CD8-positive, alpha-beta T cell (primary cell): ENCODE measurements at regions of chr17 and their contacts with region 1.

Region 1: DNA sequence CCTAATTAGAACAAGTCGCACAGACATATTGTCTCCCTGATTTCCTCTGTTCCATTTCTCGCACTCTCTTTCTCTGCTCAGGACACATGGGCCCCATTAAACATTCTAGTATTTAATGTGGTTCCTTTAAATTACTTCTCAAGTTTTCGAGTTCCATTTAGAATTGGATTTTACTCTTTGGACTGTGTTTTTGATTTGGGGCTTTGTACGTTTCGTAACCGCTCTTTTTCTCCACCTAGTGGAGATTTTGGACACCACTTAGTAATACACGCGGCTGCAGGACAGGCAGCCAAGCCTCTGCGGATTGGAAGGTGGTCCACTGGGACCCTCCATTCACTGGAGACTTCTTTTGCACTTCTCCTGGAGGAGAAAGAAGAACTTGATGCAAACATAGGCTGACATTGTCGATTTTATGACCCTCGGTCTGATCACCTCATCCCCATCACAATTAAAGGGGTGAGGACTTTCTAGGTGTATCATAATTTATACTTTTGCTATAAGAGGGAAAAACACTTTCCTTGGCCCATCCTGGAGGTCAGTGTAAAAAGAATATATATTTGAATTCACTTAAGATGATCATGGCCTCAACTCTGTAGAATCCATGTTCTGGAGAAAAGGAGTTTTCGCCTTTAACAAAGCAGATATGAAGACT is 85.7 kb downstream of the NOG start:
- DNase-seq: peak in 2 of 9 experiments; percentile 33 to 52
- ATAC-seq: peak; percentile 38
- H3K4me3 ChIP-seq: peak overlapping the region in 1 of 2 experiments; percentile 55
- H3K4me3 Mint-ChIP-seq: peak overlapping the region; percentile 79
- H3K27ac ChIP-seq: no peak overlapping the region
- H3K27ac Mint-ChIP-seq: no peak overlapping the region
- H3K4me1 ChIP-seq: peaks cover 37% of the 10 kb centered on the region
- H3K4me1 Mint-ChIP-seq: peaks cover 32% of the 10 kb centered on the region
- H3K27me3 ChIP-seq: peaks cover 0 to 13% of the 10 kb centered on the region in 2 experiments
- H3K27me3 Mint-ChIP-seq: peaks cover 58% of the 10 kb centered on the region
- CTCF ChIP-seq: peak; percentile 64

Region 2: DNA sequence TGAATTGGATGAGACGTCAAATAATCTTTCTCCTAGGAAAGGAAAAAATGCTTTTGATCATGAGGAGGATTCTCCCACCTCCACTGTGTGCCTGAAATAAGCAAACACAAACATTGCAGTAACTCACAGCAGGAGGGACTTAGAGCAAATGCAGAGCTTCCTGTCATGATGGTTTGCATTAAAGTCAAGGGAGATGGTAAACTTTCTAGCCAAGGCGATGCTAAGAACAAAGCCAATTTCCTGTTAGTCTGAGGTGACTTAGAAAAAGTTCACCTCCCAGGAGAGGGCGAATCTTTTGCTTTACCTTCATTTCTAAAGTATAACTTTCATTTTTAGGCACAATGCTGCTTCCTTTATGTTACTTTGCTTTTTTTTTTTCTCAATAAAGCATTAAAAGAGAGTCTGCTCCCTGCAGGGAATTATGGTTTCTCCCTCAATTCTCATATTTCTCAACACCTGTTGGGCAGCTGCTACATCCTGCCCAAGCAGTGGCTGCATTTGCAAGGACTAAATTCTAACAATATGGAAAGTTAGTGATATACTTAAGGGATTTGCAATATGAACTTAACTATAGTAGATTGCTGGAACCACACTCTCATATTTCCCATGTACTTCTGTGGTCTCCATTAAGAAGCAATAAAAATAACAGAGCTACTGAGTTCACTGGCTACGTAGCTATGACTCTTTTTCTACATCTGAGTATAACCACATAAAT is 752.8 kb before region 1 on chr17:
- CTCF ChIA-PET with region 1: no interaction called
- POLR2A ChIA-PET with region 1: no interaction called
- intact Hi-C with region 1: loop called in 1 of 2 experiments (anchors 5 kb)
- DNase-seq: peak in 2 of 9 experiments; percentile 17 to 45
- ATAC-seq: peak; percentile 38
- H3K4me3 ChIP-seq: no peak overlapping the region
- H3K4me3 Mint-ChIP-seq: no peak overlapping the region
- H3K27ac ChIP-seq: no peak overlapping the region
- H3K27ac Mint-ChIP-seq: peak overlapping the region; percentile 82
- H3K4me1 ChIP-seq: peaks cover 18% of the 10 kb centered on the region
- H3K4me1 Mint-ChIP-seq: peaks cover 16% of the 10 kb centered on the region
- H3K27me3 ChIP-seq: no peaks in the 10 kb centered on the region
- H3K27me3 Mint-ChIP-seq: no peaks in the 10 kb centered on the region
- CTCF ChIP-seq: no peak

Region 3: GRCh38 chr17:56653877-56654276 is 25.4 kb before region 1 on chr17:
- CTCF ChIA-PET with region 1: interaction called, 3 read pairs
- POLR2A ChIA-PET with region 1: no interaction called
- intact Hi-C with region 1: loop called in 1 of 2 experiments (anchors 1 kb)
- DNase-seq: peak; percentile 17 to 86 (median 58)
- ATAC-seq: peak; percentile 99
- H3K4me3 ChIP-seq: no peak overlapping the region
- H3K4me3 Mint-ChIP-seq: no peak overlapping the region
- H3K27ac ChIP-seq: no peak overlapping the region
- H3K27ac Mint-ChIP-seq: peak overlapping the region; percentile 69
- H3K4me1 ChIP-seq: peaks cover 4% of the 10 kb centered on the region
- H3K4me1 Mint-ChIP-seq: peaks cover 6% of the 10 kb centered on the region
- H3K27me3 ChIP-seq: no peaks in the 10 kb centered on the region
- H3K27me3 Mint-ChIP-seq: peaks cover 11% of the 10 kb centered on the region
- CTCF ChIP-seq: peak; percentile 56